Esophagus squamous epithelium (tissue), 5 donors: ENCODE measurements at regions of chr19 and their contacts with region 1.

Region 1: DNA sequence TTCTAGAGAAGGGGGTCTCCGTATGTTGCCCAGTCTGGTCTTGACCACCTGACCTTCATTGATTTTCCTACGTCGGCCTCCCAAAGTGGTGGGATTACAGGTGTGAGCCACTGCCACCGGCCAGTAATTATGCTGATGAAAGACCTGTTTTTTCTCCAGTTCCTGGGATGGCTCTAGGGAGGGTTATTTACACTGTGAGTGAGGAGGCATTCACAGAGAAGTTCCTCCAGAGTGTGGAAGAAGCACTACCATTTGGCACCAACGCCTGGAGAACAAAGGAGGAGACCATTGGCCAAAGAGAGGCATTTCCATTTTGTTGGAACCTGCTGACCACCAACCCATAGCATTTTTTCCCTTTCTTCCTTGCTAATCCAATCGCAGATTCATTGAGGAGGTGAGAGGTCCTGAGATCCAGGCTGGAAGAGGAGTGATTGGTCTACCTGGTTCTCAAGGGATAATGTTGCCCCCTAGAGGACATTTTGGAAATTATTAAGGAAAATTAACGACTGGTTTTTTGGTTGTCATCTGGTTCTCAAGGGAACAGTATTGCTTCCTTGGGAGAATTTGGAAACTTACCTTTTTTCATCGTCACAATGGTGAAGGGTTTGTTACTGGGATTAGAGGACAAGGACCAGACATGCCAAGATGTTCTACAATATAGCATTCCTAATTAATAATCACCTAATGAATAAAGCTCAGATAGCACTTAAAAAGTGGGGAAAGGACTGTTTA is 5.5 kb upstream of the SAE1 start:
- DNase-seq: no peak
- H3K4me3 ChIP-seq: no peak overlapping the region
- H3K27ac ChIP-seq: peak overlapping the region in 3 of 4 donors; percentile 29 to 52 (median 40)
- H3K4me1 ChIP-seq: peaks cover 0 to 11% (median 0%) of the 10 kb centered on the region in 3 donors
- H3K27me3 ChIP-seq: no peaks in the 10 kb centered on the region
- CTCF ChIP-seq: peak; percentile 49 to 87 (median 80)
- POLR2A ChIP-seq: no peak

Region 2: GRCh38 chr19:47032171-47032811 is 92.8 kb before region 1 on chr19:
- intact Hi-C with region 1: loop called (anchors 5 kb)
- DNase-seq: no peak
- H3K4me3 ChIP-seq: no peak overlapping the region
- H3K27ac ChIP-seq: no peak overlapping the region
- H3K4me1 ChIP-seq: peaks cover 6 to 29% (median 12%) of the 10 kb centered on the region in 3 donors
- H3K27me3 ChIP-seq: peaks cover 0 to 76% (median 6%) of the 10 kb centered on the region in 4 donors
- CTCF ChIP-seq: peak; percentile 36 to 86 (median 69)
- POLR2A ChIP-seq: no peak

Region 3: DNA sequence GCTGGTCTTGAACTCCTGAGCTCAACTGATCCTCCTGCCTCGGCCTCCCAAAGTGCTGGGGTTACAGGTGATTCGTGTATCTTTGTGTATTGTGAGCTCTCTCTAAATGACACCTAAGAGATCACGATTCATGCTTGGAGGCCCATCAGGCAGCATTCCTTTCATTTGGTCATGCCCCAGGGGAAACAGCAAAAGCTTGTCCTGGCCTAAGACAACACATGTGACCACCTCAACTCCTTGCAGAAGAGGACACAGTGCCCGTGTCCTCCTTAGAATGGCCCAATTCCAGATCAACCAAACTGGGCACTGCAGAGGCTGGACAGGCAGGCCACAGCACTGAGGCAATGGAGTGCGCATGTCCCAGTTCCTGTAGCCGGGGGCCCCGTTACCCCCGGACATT is 44.0 kb before region 1 on chr19:
- intact Hi-C with region 1: loop called (anchors 2 kb)
- DNase-seq: no peak
- H3K4me3 ChIP-seq: no peak overlapping the region
- H3K27ac ChIP-seq: no peak overlapping the region
- H3K4me1 ChIP-seq: peaks cover 0 to 9% (median 4%) of the 10 kb centered on the region in 3 donors
- H3K27me3 ChIP-seq: no peaks in the 10 kb centered on the region
- CTCF ChIP-seq: no peak
- POLR2A ChIP-seq: no peak